ENCODE measurements at regions of chr5 and their contacts with region 1.

Region 1: GRCh38 chr5:171907725-171908343 is 98.6 kb downstream of the FBXW11 start:
- DNase-seq: peak; percentile 72
- ATAC-seq: peak; percentile 92
- H3K4me3 ChIP-seq: no peak overlapping the region
- H3K27ac ChIP-seq: no peak overlapping the region
- H3K4me1 ChIP-seq: no peaks in the 10 kb centered on the region
- H3K27me3 ChIP-seq: no peaks in the 10 kb centered on the region
- CTCF ChIP-seq: peak; percentile 76
- POLR2A ChIP-seq: no peak
- RAD21 ChIP-seq: peak; percentile 75

Region 2: GRCh38 chr5:171435908-171436307 is 471.9 kb before region 1 on chr5:
- CTCF ChIA-PET with region 1: no interaction called
- POLR2A ChIA-PET with region 1: interaction called, 12 read pairs
- dilution Hi-C with region 1: no loop called
- in situ Hi-C with region 1: no loop called
- intact Hi-C with region 1: no loop called
- DNase-seq: no peak
- ATAC-seq: no peak
- H3K4me3 ChIP-seq: no peak overlapping the region
- H3K27ac ChIP-seq: no peak overlapping the region
- H3K4me1 ChIP-seq: no peaks in the 10 kb centered on the region
- H3K27me3 ChIP-seq: no peaks in the 10 kb centered on the region; the same call in 1 of the 2 replicates
- CTCF ChIP-seq: no peak
- POLR2A ChIP-seq: no peak
- RAD21 ChIP-seq: no peak

Region 3: GRCh38 chr5:171484460-171484899 is 423.4 kb before region 1 on chr5:
- CTCF ChIA-PET with region 1: no interaction called
- POLR2A ChIA-PET with region 1: no interaction called
- dilution Hi-C with region 1: no loop called
- in situ Hi-C with region 1: no loop called
- intact Hi-C with region 1: loop called (anchors 5 kb)
- DNase-seq: no peak
- ATAC-seq: peak; percentile 53; the same call in 1 of the 2 replicates
- H3K4me3 ChIP-seq: no peak overlapping the region
- H3K27ac ChIP-seq: no peak overlapping the region
- H3K4me1 ChIP-seq: peaks cover 2% of the 10 kb centered on the region; the same call in 1 of the 2 replicates
- H3K27me3 ChIP-seq: peaks cover 17% of the 10 kb centered on the region
- CTCF ChIP-seq: peak; percentile 60
- POLR2A ChIP-seq: no peak
- RAD21 ChIP-seq: peak; percentile 51

Region 4: DNA sequence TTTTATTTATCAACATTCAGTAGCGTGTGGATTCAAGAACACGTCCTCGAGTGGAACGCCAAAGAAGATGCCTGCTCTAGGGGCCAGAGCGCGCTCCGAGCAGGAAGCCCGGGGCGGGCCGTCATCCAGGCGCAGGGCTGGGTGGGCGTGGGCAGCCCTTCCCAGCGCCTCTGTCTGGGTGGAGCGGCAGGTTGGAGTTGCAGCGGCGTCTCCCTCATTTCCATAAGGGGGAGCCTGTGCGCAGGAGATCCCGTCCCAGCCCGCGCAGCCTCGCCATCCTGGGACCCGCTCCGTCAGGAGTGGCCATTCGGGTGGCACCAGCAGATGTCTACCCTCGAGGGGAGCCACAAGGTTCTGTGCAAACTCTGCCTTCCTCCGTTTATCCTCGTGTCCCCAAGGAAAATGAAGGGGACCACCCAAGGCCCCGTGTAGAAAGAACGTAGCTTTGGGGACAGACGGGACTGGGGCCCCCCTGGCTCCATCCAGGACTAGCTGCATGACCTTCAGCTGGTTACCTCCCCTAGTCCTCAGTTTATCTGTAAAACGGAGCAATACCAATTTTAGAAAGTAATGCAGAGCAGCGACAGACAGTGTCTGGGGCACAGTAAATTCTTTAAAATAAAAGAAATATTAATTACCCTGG is 277.7 kb before region 1 on chr5:
- CTCF ChIA-PET with region 1: interaction called, 3 read pairs
- POLR2A ChIA-PET with region 1: no interaction called
- dilution Hi-C with region 1: no loop called
- in situ Hi-C with region 1: no loop called
- intact Hi-C with region 1: loop called (anchors 1 kb)
- DNase-seq: peak; percentile 52
- ATAC-seq: peak; percentile 99
- H3K4me3 ChIP-seq: no peak overlapping the region
- H3K27ac ChIP-seq: no peak overlapping the region
- H3K4me1 ChIP-seq: no peaks in the 10 kb centered on the region
- H3K27me3 ChIP-seq: peaks cover 51% of the 10 kb centered on the region
- CTCF ChIP-seq: peak; percentile 63
- POLR2A ChIP-seq: no peak
- RAD21 ChIP-seq: peak; percentile 73

Region 5: GRCh38 chr5:172035039-172035438 is 127.2 kb after region 1 on chr5:
- CTCF ChIA-PET with region 1: interaction called, 5 read pairs
- POLR2A ChIA-PET with region 1: no interaction called
- dilution Hi-C with region 1: no loop called
- in situ Hi-C with region 1: loop called (anchors 10 kb)
- intact Hi-C with region 1: loop called (anchors 1 kb)
- DNase-seq: no peak
- ATAC-seq: no peak
- H3K4me3 ChIP-seq: no peak overlapping the region
- H3K27ac ChIP-seq: no peak overlapping the region
- H3K4me1 ChIP-seq: no peaks in the 10 kb centered on the region
- H3K27me3 ChIP-seq: no peaks in the 10 kb centered on the region
- CTCF ChIP-seq: no peak
- POLR2A ChIP-seq: no peak
- RAD21 ChIP-seq: no peak

Region 6: DNA sequence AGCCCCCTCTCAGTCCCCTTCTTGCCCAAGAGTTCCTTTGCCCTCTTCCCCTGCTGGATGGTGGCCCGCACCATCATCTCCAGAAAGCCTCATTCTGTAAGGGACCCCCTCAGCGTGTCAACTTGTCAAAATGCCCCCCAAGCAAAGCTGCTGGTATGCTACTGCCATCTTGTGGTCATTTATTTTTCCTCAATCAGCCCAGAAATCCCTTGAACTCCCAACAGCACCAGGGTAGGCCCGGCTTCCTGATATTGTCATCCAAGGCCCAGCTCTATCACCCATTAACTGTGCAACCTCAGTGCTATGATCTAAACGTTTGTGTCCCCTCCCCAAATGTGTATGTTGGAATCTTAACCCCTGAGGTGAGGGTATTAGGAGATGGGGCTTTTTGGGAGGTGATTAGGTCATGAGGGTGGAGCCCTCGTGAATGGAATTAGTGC is 151.8 kb after region 1 on chr5:
- CTCF ChIA-PET with region 1: interaction called, 12 read pairs
- POLR2A ChIA-PET with region 1: no interaction called
- dilution Hi-C with region 1: no loop called
- in situ Hi-C with region 1: no loop called
- intact Hi-C with region 1: loop called (anchors 1 kb)
- DNase-seq: no peak
- ATAC-seq: peak; percentile 63
- H3K4me3 ChIP-seq: no peak overlapping the region
- H3K27ac ChIP-seq: no peak overlapping the region
- H3K4me1 ChIP-seq: no peaks in the 10 kb centered on the region
- H3K27me3 ChIP-seq: no peaks in the 10 kb centered on the region
- CTCF ChIP-seq: peak; percentile 55
- POLR2A ChIP-seq: no peak
- RAD21 ChIP-seq: peak; percentile 69

Region 7: DNA sequence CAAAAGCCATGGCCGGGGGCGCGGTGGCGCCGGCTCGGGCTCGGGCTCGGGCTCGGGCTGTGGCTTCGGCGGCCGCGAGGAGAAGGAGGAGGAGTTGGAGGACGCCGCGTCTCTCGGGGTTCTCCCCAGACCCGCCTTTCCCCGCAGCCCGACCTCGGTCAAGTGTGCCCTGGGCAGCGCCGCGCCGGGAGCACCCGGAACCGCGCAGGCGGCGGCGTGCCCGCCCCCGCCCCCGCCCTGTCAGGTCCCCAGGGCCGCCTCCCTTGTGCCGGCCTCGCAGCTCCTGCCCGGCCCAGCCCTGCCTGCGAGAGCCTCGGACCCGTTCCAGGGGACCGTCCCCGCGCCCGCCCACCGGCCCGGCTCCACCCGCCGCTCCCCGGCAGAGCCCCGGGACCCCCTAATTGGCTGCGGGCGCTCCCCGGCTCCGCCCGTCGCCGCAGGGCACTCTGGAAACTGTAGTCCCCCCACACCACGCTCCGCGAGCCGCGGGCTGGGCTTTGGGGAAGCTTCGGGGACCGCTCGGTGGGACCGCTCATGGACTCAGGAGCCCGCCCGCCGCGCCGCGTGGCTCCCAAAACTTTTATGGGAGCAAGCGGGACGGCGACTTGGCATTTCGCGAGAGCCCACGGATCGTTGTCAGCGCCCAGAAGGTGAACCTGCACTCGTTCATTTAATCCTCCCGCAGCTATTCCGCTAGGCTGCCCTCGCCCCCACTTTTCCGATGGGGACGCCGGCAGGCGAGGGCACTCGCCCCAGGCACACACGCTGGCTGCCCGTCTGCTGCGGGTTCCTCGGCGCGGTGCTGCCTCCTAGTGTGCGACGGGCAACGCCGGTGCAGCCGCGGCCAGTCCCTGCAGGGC is 280.4 kb after region 1 on chr5 and contains the start of gene STK10:
- CTCF ChIA-PET with region 1: no interaction called
- POLR2A ChIA-PET with region 1: no interaction called
- dilution Hi-C with region 1: no loop called
- in situ Hi-C with region 1: no loop called
- intact Hi-C with region 1: loop called (anchors 1 kb)
- DNase-seq: peak; percentile 87
- ATAC-seq: peak; percentile 90
- H3K4me3 ChIP-seq: peak within 1 kb of the TSS; percentile 98
- H3K27ac ChIP-seq: peak within 1 kb of the TSS; percentile 88
- H3K4me1 ChIP-seq: peaks cover 11% of the 10 kb centered on the region
- H3K27me3 ChIP-seq: no peaks in the 10 kb centered on the region
- CTCF ChIP-seq: peak; percentile 92
- POLR2A ChIP-seq: 0 out of 2 replicates have a peak, but pooled peaks have one; percentile 17
- RAD21 ChIP-seq: peak; percentile 96
- total RNA-seq, gene STK10: 15.4 and 16.4 TPM in 2 replicates

Measured in IMR-90 (cell line).